ENCODE measurements at regions of chr11 and their contacts with region 1.

Region 1: DNA sequence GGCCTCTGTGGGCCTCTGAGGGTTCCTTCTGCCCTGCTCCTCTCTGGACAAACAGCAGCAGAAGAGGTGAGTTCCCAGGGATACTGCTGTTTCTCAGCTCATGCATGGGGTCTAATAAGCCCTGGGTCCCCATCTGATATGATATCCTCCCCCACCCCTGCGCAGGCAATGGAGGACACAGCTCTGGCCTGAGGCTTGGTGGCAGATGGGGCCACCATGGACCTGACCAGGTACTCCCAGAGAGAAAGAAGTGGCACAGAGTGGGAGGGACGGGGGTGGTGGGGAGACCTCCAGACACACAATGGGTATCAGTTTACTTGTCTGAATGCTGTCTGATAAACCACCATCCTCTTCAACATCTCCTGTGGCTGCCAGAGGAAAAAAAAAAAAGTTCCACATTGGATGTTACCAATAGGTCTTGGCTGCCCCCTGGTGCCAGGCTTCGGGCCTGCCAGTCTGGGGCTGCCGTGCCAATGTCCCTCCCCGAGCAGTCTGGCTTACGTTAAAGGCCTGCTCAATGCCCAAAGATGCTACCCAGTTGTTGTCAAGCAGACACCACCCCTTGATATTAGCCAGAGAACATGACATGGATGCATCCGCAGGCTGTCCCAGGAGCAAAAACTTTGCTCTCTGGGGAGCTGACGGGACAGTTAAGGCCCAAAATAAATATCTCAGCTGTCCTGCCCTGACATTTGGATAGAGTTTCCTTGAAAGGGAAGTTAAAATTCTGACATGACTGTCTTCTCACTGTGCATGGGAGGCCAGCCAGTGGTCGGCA is 27.9 kb upstream of the ABCC8 start:
- DNase-seq: peak; percentile 13
- H3K4me3 ChIP-seq: no peak overlapping the region
- H3K27ac ChIP-seq: no peak overlapping the region
- H3K4me1 ChIP-seq: no peaks in the 10 kb centered on the region
- H3K27me3 ChIP-seq: peaks cover 0 to 9% (median 0%) of the 10 kb centered on the region in 4 donors
- CTCF ChIP-seq: peak; percentile 69 to 89 (median 83)
- POLR2A ChIP-seq: no peak

Region 2: GRCh38 chr11:17221968-17222367 is 282.6 kb before region 1 on chr11:
- intact Hi-C with region 1: loop called (anchors 10 kb)
- DNase-seq: no peak
- H3K4me3 ChIP-seq: no peak overlapping the region
- H3K27ac ChIP-seq: no peak overlapping the region
- H3K4me1 ChIP-seq: no peaks in the 10 kb centered on the region
- H3K27me3 ChIP-seq: no peaks in the 10 kb centered on the region
- CTCF ChIP-seq: no peak
- POLR2A ChIP-seq: no peak

Region 3: GRCh38 chr11:17389211-17389956 is 115.1 kb before region 1 on chr11:
- intact Hi-C with region 1: loop called (anchors 5 kb)
- DNase-seq: no peak
- H3K4me3 ChIP-seq: peak overlapping the region; percentile 43 to 79 (median 56)
- H3K27ac ChIP-seq: peak overlapping the region; percentile 45 to 66 (median 50)
- H3K4me1 ChIP-seq: peaks cover 4 to 26% (median 9%) of the 10 kb centered on the region in 3 donors
- H3K27me3 ChIP-seq: peaks cover 0 to 27% (median 0%) of the 10 kb centered on the region in 4 donors
- CTCF ChIP-seq: peak; percentile 54 to 92 (median 63)
- POLR2A ChIP-seq: no peak

Measured in esophagus squamous epithelium (tissue), 5 donors.